AG04450 (cell line): ENCODE measurements at regions of chr3 and their contacts with region 1.

Region 1: DNA sequence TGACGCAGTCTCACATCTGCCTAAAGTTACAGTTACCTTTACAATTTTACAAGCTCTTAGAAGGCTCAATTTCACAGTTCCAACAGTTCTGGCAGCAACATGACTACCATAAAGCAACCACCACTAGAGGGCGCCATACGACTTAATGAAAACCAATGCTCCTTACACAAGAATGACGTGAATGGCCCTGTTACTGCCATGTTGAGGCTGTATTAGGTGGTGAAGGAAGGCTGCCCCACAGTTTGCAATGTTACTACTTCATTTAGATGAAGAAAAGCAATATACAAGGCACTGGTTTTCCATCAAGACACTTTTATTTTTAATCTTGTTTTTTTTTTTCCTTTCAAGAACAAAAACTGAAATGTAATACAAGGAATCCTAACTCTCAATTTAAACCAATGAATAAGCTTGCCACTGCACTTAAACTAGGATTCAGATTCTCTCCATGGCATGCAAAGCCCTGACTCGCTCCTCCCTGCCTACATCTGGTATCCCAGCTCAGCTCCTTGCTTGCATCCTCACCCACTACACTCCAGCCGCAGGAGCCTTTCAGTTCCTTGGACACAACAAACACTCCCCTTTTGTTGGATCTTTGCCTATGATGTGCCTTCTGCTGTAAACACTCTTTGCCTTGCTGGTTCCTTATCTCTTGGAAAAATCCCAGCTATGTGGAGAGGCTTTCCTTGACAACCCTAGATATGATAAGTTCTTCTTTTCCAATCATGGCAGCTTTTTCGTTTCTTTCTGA is 270.7 kb downstream of the GBE1 start:
- DNase-seq: peak; percentile 72
- H3K4me3 ChIP-seq: no peak overlapping the region
- H3K27ac ChIP-seq: no peak overlapping the region
- H3K27me3 ChIP-seq: no peaks in the 10 kb centered on the region
- CTCF ChIP-seq: peak; percentile 77

Region 2: GRCh38 chr3:81468391-81468790 is 22.3 kb before region 1 on chr3:
- CTCF ChIA-PET with region 1: interaction called, 17 read pairs
- POLR2A ChIA-PET with region 1: no interaction called
- DNase-seq: no peak
- H3K4me3 ChIP-seq: no peak overlapping the region
- H3K27ac ChIP-seq: no peak overlapping the region
- H3K27me3 ChIP-seq: no peaks in the 10 kb centered on the region
- CTCF ChIP-seq: no peak

Region 3: DNA sequence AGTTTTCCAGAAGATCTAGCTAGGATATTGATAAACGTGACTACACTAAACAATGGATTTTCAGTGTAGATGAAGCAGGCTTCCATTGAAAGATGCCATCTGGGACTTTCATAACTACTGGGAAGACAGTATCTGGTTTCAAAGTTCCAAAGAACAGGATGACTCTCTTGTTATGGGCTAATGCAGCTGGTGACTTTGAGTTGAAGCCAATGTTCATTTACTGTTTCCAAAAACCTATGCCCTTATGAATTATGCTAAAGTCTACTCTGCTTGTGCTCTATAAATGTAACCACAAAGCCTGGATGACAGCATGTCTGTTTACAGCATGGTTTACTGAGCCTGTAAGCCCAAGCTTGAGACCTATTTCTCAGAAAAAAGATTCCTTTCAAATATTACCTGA is 25.3 kb after region 1 on chr3:
- CTCF ChIA-PET with region 1: interaction called, 47 read pairs
- POLR2A ChIA-PET with region 1: no interaction called
- DNase-seq: no peak
- H3K4me3 ChIP-seq: no peak overlapping the region
- H3K27ac ChIP-seq: no peak overlapping the region
- H3K27me3 ChIP-seq: no peaks in the 10 kb centered on the region
- CTCF ChIP-seq: no peak

Region 4: GRCh38 chr3:81581966-81582599 is 91.4 kb after region 1 on chr3:
- CTCF ChIA-PET with region 1: interaction called, 13 read pairs
- POLR2A ChIA-PET with region 1: no interaction called
- DNase-seq: peak; percentile 13
- H3K4me3 ChIP-seq: no peak overlapping the region
- H3K27ac ChIP-seq: no peak overlapping the region
- H3K27me3 ChIP-seq: no peaks in the 10 kb centered on the region
- CTCF ChIP-seq: peak; percentile 86

Region 5: GRCh38 chr3:81699536-81700320 is 209.0 kb after region 1 on chr3:
- CTCF ChIA-PET with region 1: no interaction called
- POLR2A ChIA-PET with region 1: no interaction called
- DNase-seq: no peak
- H3K4me3 ChIP-seq: no peak overlapping the region
- H3K27ac ChIP-seq: no peak overlapping the region
- H3K27me3 ChIP-seq: no peaks in the 10 kb centered on the region
- CTCF ChIP-seq: no peak

Region 6: DNA sequence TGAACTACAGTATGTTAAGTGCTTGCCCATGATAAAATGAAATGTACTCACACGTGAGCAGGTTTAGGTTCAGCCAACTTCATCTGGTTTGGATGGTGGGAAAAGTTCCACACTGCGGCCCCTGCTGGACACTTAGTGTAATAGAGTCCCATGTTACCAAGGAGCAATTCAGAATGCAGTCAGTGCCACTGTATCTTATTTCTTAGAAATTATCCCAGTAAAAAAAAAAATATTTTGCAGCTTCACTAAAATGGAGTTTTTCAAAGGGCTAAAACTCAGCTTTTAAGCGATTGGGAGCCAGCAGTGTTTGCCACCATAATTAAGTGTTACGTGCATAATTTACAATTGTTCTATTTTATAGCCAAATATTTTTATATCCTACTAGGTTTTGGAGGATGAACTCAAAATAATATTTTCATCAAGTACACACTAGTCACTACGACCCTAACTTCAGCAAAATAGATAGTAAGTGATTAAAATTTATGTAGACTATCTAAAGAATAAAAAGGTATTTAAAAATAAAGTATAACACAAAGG is 642.4 kb after region 1 on chr3:
- CTCF ChIA-PET with region 1: interaction called, 22 read pairs
- POLR2A ChIA-PET with region 1: no interaction called
- DNase-seq: peak; percentile 24
- H3K4me3 ChIP-seq: no peak overlapping the region
- H3K27ac ChIP-seq: no peak overlapping the region
- H3K27me3 ChIP-seq: no peaks in the 10 kb centered on the region
- CTCF ChIP-seq: peak; percentile 89